Panc1 (cell line): ENCODE measurements at regions of chr1 and their contacts with region 1.

Region 1: DNA sequence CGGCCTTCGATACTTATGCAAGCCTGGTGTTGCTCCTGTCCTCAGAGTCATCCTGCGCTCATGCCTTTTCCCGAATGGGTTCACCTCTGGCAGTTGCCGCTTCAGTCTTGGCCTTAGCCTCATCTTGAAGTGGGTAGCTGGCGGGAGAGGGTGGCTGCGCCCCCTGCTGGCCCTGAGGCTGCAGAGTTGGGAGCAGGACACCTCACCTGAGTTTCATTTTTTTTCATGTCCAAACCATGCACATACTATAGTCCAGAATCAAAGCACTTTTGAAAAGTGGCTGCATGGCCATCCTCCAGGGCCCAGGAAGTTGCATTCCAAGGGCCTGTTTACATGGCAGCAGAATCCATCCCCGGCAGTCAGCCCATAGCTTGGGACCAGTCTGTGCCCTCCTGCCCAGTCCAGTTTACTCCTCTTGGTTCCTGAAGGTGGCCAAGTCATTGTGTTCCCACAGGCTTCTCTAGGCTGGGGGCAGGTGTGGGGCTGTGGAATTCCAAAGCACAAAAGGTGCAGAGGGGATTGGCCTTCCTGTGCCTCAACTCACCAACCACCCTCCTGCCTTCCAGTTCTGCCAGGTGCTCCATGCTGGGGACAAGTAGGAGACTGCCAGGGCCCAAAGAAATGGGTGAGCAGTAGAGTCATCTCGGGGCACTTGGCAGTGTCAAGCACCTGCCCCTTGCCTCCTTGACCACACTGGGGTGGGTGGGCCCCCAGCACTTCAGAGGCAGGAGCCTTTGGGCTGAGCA is 44.0 kb downstream of the YARS1 start:
- DNase-seq: peak; percentile 71
- ATAC-seq: peak; percentile 85
- H3K4me3 ChIP-seq: no peak overlapping the region
- H3K27ac ChIP-seq: peak overlapping the region; percentile 19; the same call in 1 of the 2 replicates
- H3K4me1 ChIP-seq: peaks cover 58% of the 10 kb centered on the region
- H3K27me3 ChIP-seq: no peaks in the 10 kb centered on the region
- CTCF ChIP-seq: peak; percentile 97

Region 2: DNA sequence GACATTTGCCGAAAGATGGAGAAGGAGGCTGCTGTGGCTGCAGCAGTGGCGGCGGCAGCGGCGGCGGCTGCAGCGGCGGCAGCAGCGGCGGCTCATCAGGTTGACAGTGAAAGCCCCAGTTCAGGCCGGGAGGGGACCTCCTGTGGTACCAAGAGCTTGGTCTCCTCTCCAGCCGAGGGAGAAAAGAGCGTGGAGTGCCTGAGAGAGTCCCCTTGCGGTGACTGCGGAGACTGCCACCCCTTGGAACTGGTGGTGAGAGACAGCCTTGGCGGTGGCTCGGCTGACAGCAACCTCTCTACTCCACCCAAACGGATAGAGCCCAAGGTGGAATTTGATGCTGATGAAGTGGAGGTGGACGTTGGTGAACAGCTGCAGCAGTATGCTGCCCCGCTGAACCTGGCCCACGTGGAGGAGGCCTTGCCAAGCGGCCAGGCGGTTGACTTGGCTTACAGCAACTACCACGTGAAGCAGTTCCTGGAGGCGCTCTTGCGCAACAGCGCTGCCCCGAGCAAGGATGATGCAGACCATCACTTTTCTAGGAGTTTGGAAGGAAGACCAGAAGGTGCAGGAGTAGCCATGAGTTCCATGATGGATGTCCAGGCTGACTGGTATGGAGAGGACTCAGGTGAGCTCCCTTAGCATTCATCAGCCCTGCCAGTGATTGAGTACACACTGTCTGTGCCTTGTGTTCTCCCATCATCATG is 302.0 kb before region 1 on chr1:
- CTCF ChIA-PET with region 1: interaction called, 11 read pairs
- POLR2A ChIA-PET with region 1: no interaction called
- in situ Hi-C with region 1: no loop called
- intact Hi-C with region 1: no loop called
- DNase-seq: no peak
- ATAC-seq: peak; percentile 36; the same call in 1 of the 2 replicates
- H3K4me3 ChIP-seq: no peak overlapping the region
- H3K27ac ChIP-seq: no peak overlapping the region
- H3K4me1 ChIP-seq: no peaks in the 10 kb centered on the region
- H3K27me3 ChIP-seq: peaks cover 5% of the 10 kb centered on the region
- CTCF ChIP-seq: no peak

Region 3: GRCh38 chr1:32709075-32709474 is 64.1 kb before region 1 on chr1:
- CTCF ChIA-PET with region 1: interaction called, 72 read pairs
- POLR2A ChIA-PET with region 1: interaction called, 3 read pairs
- in situ Hi-C with region 1: loop called (anchors 10 kb)
- intact Hi-C with region 1: loop called (anchors 1 kb)
- DNase-seq: no peak
- ATAC-seq: no peak
- H3K4me3 ChIP-seq: no peak overlapping the region
- H3K27ac ChIP-seq: no peak overlapping the region
- H3K4me1 ChIP-seq: no peaks in the 10 kb centered on the region
- H3K27me3 ChIP-seq: no peaks in the 10 kb centered on the region
- CTCF ChIP-seq: no peak

Region 4: DNA sequence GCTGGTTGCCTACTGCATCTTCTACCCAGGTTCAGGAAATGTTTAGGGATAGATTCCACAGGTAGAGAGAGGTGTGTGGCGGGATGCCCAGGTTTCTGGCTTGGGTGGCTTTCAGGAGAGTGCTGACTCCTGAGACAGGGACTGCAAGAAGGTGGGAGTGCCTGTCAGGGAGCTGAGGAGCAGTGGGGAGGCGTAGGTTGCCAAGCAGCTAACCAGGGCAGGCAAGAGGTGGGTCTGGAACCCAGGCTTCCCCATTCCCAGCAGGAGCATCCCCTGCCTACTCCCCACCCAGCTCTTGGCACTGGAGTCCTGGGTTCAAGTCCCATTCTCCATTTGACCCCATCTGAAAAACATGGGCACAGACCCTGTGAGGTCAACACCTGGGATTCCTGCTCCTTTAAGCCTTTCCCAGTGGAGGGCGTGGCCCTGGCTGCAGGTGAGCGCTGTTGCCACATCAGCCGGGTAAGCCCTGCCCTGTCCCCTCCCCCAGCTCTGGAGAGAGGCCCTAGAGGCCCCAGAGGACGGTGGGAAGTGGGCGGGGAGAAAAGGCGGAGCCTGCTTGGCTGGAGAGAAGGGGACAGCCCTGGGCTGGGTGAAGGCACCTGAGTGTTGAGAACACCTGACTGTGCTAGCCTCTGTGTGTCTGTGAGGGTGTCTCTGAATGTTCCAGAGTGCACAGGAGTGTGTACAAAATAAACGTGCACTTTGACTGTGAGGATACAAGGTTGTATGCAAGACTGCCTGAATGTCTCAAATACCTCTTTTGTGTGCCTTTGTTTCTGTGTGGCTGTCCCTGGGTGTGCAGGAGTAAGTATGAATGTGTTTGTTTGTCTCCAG is 56.7 kb before region 1 on chr1:
- CTCF ChIA-PET with region 1: interaction called, 72 read pairs
- POLR2A ChIA-PET with region 1: no interaction called
- in situ Hi-C with region 1: loop called (anchors 10 kb)
- intact Hi-C with region 1: no loop called
- DNase-seq: no peak
- ATAC-seq: peak; percentile 67
- H3K4me3 ChIP-seq: no peak overlapping the region
- H3K27ac ChIP-seq: no peak overlapping the region; the same call in 1 of the 2 replicates
- H3K4me1 ChIP-seq: peaks cover 5% of the 10 kb centered on the region; the same call in 1 of the 2 replicates
- H3K27me3 ChIP-seq: no peaks in the 10 kb centered on the region
- CTCF ChIP-seq: no peak